ENCODE measurements at regions of chr9 and their contacts with region 1.

Region 1: DNA sequence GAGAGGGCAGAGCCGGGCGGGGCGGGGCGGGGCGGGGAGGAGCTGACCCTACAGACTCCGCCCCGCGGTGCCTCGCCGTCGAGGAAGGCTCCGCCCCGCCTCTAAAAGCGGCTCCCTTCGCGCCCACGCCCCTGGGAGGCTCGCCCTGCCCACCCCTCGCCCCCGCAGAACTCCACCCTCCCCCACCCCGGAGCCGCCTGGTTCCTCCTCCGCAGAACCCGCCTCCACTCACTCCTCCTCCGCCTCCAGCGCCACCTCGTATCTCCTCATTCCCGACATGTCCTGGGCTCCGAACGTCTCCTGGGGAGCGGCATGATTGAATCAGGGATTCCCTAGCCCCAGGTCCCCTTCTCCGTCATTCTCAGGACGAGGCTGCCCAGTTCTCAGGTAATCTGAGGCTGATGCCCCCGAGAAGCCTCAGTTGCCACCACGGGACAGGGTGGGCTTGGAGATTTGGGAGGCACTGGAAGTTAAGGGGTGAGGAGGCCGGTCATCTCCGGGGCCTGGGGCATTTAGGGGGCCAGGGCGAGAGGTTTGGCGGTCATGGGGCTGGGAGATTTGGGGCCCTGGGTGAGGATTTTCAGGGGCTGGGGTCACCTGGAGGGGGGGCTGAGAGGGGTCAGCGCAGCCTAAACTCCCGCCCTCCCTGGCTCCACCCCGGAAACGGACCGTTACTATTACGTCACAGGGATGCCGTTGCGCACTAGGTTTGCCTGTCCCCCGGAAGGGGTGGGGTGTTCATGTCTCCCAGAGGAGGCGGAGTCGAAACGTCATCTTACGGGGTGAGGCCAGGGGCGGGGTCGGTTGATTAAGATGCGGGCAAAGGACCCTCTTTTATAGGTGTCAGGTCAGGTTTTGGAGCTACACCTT is 3.2 kb upstream of the CCL27 start:
- DNase-seq: peak; percentile 75 to 96 (median 89)
- ATAC-seq: peak; percentile 83
- H3K4me3 ChIP-seq: peak overlapping the region; percentile 86 to 93
- H3K4me3 Mint-ChIP-seq: peak overlapping the region; percentile 92
- H3K27ac ChIP-seq: peak overlapping the region; percentile 96 to 99
- H3K27ac Mint-ChIP-seq: peak overlapping the region; percentile 97
- H3K4me1 ChIP-seq: peaks cover 37% of the 10 kb centered on the region
- H3K4me1 Mint-ChIP-seq: peaks cover 36% of the 10 kb centered on the region
- H3K27me3 ChIP-seq: no peaks in the 10 kb centered on the region
- H3K27me3 Mint-ChIP-seq: no peaks in the 10 kb centered on the region
- CTCF ChIP-seq: no peak

Region 2: DNA sequence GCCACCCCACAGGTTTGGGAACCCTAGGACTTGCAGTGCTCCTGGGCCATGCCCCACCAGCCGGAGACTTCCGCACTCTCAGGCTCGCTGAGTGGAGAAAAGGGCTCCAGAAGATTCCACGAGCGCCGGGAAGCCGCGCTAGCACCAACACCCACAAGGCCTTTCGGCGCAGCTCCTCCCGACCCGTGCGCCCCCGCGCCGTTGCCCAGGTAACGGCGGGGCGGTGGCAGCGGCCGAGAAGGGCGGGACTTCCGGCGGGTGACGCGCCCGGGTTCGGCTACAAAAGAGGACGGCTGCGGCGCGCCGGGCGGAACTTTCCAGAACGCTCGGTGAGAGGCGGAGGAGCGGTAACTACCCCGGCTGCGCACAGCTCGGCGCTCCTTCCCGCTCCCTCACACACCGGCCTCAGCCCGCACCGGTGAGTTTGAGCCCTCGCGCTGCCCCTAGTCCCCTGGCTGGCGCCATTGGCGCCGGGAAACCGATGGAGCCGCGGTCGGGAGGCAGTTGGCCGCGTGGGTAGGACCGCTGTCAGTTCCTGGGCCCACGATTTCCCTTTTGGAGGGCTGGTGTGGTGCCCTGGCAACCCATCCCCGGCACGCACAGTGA is 1640.5 kb before region 1 on chr9 and contains the start of gene DNAJA1:
- CTCF ChIA-PET with region 1: no interaction called
- POLR2A ChIA-PET with region 1: no interaction called
- intact Hi-C with region 1: no loop called
- DNase-seq: peak; percentile 92 to 98 (median 96)
- ATAC-seq: peak; percentile 80
- H3K4me3 ChIP-seq: peak within 1 kb of the TSS; percentile 100
- H3K4me3 Mint-ChIP-seq: peak within 1 kb of the TSS; percentile 96
- H3K27ac ChIP-seq: peak within 1 kb of the TSS; percentile 100
- H3K27ac Mint-ChIP-seq: peak within 1 kb of the TSS; percentile 96
- H3K4me1 ChIP-seq: peaks cover 63% of the 10 kb centered on the region
- H3K4me1 Mint-ChIP-seq: peaks cover 70% of the 10 kb centered on the region
- H3K27me3 ChIP-seq: no peaks in the 10 kb centered on the region
- H3K27me3 Mint-ChIP-seq: no peaks in the 10 kb centered on the region
- CTCF ChIP-seq: no peak
- total RNA-seq, gene DNAJA1: 170 to 172 TPM

Region 3: DNA sequence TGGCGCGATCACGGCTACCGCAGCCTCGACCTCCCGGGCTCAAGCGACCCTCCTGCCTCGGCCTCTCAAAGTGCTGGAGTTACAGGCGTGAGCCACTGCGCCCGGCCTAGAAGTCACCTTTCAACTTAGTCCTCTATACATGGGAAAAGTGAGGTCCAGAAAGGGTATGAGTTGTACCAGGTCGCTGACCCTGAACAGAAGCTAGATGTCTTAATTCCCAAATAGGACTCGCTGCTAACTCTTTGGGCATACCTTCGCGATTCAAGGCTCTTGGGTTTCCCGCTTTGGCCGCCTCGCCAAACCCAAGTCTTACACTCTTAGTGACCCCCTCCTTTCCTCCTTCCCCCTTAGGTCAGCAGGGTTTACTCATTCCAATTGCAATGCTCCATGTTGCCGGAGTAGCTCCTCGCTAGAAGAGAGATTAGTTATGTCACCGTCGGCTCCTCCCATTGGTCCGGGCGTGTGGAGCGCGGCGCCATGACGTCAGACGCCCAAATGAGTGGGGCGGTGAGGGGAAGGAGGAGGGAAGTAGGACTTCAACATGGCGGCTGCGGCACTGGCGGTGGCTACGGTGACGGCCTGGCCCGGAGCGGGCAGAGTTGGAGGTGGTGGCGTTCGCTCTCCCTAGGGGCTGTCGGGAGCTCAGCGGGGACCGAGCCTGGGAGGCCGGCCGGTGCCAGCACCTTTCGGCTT is 486.9 kb before region 1 on chr9 and contains the start of gene UBAP1:
- CTCF ChIA-PET with region 1: no interaction called
- POLR2A ChIA-PET with region 1: no interaction called
- intact Hi-C with region 1: loop called in 1 of 2 experiments (anchors 5 kb)
- DNase-seq: peak; percentile 89 to 98 (median 95)
- ATAC-seq: peak; percentile 98
- H3K4me3 ChIP-seq: peak within 1 kb of the TSS; percentile 88 to 93
- H3K4me3 Mint-ChIP-seq: peak within 1 kb of the TSS; percentile 97
- H3K27ac ChIP-seq: peak within 1 kb of the TSS; percentile 92 to 96
- H3K27ac Mint-ChIP-seq: peak within 1 kb of the TSS; percentile 98
- H3K4me1 ChIP-seq: peaks cover 9% of the 10 kb centered on the region
- H3K4me1 Mint-ChIP-seq: peaks cover 24% of the 10 kb centered on the region
- H3K27me3 ChIP-seq: no peaks in the 10 kb centered on the region
- H3K27me3 Mint-ChIP-seq: no peaks in the 10 kb centered on the region
- CTCF ChIP-seq: no peak
- total RNA-seq, gene UBAP1: 70.9 to 73.2 TPM

Region 4: GRCh38 chr9:34611829-34612630 is 53.6 kb before region 1 on chr9 and contains the start of gene RPP25L:
- CTCF ChIA-PET with region 1: interaction called, 4 read pairs
- POLR2A ChIA-PET with region 1: interaction called, 7 read pairs
- intact Hi-C with region 1: loop called (anchors 2 kb)
- DNase-seq: peak; percentile 65 to 92 (median 85)
- ATAC-seq: peak; percentile 95
- H3K4me3 ChIP-seq: peak within 1 kb of the TSS; percentile 88 to 93
- H3K4me3 Mint-ChIP-seq: peak within 1 kb of the TSS; percentile 85
- H3K27ac ChIP-seq: peak within 1 kb of the TSS; percentile 77 to 91
- H3K27ac Mint-ChIP-seq: peak within 1 kb of the TSS; percentile 91
- H3K4me1 ChIP-seq: peaks cover 17% of the 10 kb centered on the region
- H3K4me1 Mint-ChIP-seq: peaks cover 23% of the 10 kb centered on the region
- H3K27me3 ChIP-seq: no peaks in the 10 kb centered on the region
- H3K27me3 Mint-ChIP-seq: no peaks in the 10 kb centered on the region
- CTCF ChIP-seq: no peak
- total RNA-seq, gene RPP25L: 4.4 to 5.1 TPM

Region 5: DNA sequence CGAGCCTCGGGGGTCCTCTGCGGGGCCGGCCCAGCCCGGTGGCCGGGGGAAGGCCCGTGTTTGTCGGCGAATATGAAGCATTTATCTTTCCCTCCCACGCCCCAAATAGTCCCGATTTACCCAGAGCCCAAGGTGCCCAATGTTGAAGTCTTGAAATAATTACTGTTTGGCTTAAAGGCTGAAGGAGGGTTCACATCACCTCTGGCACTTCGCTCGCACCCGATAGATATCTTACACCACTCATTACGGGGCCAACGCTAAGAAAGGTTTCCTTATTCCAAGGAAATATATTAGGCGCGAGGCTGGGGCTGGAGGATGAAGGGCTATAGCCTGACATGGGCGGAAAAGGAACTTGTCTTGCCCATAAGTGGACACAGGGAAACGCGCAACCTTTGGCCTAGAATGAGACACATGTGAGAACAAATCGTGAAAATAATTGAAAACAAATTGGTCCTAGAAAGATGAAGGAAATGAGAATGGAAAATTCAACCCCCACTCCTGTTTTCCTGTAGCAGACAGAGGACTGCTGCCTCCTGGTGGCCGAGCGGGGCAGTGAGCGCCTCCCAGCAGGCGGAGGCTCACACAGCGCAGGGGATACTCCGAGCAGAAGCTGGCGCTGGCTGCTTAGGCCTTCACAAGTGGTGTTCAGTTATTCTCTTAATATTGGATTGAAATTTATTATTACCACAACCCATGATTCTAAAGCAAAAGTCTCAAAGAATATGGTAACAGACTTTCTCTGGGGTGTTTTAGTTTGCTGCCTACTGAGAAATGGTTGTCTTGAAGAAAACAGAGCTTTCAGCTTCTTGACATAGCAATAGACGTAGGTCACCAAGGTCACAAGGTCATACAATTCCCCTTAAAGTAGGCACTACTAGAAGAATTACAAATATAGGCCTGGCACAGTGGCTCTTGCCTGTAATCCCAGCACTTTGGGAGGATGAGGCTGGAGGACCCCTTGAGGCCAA is 36.4 kb after region 1 on chr9:
- CTCF ChIA-PET with region 1: interaction called, 18 read pairs
- POLR2A ChIA-PET with region 1: no interaction called
- intact Hi-C with region 1: loop called (anchors 1 kb)
- DNase-seq: peak; percentile 53 to 85 (median 81)
- ATAC-seq: peak; percentile 81
- H3K4me3 ChIP-seq: peak overlapping the region; percentile 46 to 53
- H3K4me3 Mint-ChIP-seq: peak overlapping the region; percentile 77
- H3K27ac ChIP-seq: no peak overlapping the region
- H3K27ac Mint-ChIP-seq: no peak overlapping the region
- H3K4me1 ChIP-seq: peaks cover 8% of the 10 kb centered on the region
- H3K4me1 Mint-ChIP-seq: peaks cover 14% of the 10 kb centered on the region
- H3K27me3 ChIP-seq: no peaks in the 10 kb centered on the region
- H3K27me3 Mint-ChIP-seq: peaks cover 11% of the 10 kb centered on the region
- CTCF ChIP-seq: peak; percentile 98

Region 6: DNA sequence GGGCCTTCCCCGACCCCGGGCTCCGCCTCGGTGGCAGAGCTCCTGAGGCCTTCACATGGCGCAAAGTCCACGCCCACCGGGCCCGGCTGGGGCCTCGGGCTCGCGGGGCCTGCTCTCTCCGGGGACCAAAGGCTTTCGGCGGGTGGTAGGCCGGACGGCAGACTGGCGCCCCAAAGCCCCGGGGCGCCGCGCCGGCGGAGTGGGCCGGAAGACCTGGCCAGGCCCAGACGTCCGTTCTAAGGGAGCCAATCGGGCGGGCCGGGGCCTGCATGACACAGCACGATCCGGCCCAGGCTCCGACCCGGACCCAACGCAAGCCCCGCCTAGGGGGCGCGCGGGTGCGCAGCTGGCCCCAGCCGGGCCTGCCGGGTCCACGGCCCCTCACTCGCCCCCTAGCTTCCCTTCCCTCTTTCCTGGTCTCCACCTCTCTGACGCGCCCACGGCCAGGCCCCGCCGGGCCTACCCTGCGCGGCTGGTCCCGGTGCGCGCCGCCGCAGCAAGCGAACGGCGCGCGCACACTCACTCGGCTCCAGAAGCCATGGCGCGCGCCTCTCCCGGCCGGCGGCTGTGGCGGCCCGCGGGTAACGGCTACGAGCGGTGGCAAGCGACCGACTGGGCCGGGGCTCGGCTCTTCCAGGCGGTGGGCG is 406.3 kb after region 1 on chr9:
- CTCF ChIA-PET with region 1: no interaction called
- POLR2A ChIA-PET with region 1: no interaction called
- intact Hi-C with region 1: loop called in 1 of 2 experiments (anchors 10 kb)
- DNase-seq: peak; percentile 40 to 87 (median 73)
- ATAC-seq: peak; percentile 49
- H3K4me3 ChIP-seq: peak overlapping the region; percentile 82 to 93
- H3K4me3 Mint-ChIP-seq: peak overlapping the region; percentile 93
- H3K27ac ChIP-seq: peak overlapping the region; percentile 91 to 94
- H3K27ac Mint-ChIP-seq: peak overlapping the region; percentile 97
- H3K4me1 ChIP-seq: peaks cover 49% of the 10 kb centered on the region
- H3K4me1 Mint-ChIP-seq: peaks cover 49% of the 10 kb centered on the region
- H3K27me3 ChIP-seq: no peaks in the 10 kb centered on the region
- H3K27me3 Mint-ChIP-seq: no peaks in the 10 kb centered on the region
- CTCF ChIP-seq: peak; percentile 43